ENCODE measurements at regions of chr12 and their contacts with region 1.

Region 1: GRCh38 chr12:104478396-104479122 is 21.8 kb downstream of the CHST11 start:
- DNase-seq: peak; percentile 43
- ATAC-seq: peak; percentile 78
- H3K4me3 Mint-ChIP-seq: peak overlapping the region; percentile 94
- H3K27ac Mint-ChIP-seq: peak overlapping the region; percentile 96
- H3K4me1 Mint-ChIP-seq: peaks cover 73% of the 10 kb centered on the region
- H3K27me3 Mint-ChIP-seq: no peaks in the 10 kb centered on the region

Region 2: GRCh38 chr12:104411826-104412641 is 66.5 kb before region 1 on chr12:
- POLR2A ChIA-PET with region 1: no interaction called
- DNase-seq: no peak
- ATAC-seq: no peak
- H3K4me3 Mint-ChIP-seq: no peak overlapping the region
- H3K27ac Mint-ChIP-seq: no peak overlapping the region
- H3K4me1 Mint-ChIP-seq: no peaks in the 10 kb centered on the region
- H3K27me3 Mint-ChIP-seq: peaks cover 4% of the 10 kb centered on the region

Region 3: GRCh38 chr12:104467346-104467837 is 11.2 kb before region 1 on chr12:
- POLR2A ChIA-PET with region 1: interaction called, 23 read pairs
- DNase-seq: no peak
- ATAC-seq: peak; percentile 48
- H3K4me3 Mint-ChIP-seq: peak overlapping the region; percentile 71
- H3K27ac Mint-ChIP-seq: peak overlapping the region; percentile 78
- H3K4me1 Mint-ChIP-seq: peaks cover 81% of the 10 kb centered on the region
- H3K27me3 Mint-ChIP-seq: no peaks in the 10 kb centered on the region

Region 4: DNA sequence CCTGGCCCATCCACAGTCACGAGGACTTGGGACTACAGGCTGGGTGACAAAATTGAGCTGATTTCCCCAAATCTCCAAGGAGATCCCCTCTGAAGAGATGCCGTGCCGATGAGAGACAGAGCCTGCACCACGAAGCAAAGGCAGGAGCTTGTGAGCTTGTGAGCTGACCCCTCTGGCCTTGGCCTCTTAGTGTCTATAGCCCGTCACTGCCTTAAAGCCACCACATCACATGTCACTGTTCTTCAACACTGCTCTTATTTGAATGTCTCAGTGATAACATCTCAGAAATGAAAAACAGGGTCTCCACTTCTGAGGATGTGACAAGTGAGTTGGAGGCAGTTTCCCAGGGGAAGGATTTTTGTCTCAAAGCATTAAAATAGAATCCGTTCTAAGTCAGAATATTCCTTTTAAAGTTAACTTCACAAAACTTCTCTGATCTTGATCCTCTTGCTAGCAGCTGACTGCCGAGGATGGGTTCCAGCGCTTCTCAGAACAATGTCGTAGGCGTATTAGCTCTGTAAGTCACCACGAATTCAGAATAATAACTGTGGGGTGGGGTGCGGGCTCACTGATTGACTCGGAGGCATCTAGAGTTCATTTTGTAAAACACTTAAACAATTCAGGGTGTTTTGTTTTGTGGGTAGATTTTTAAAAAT is 15.7 kb after region 1 on chr12:
- POLR2A ChIA-PET with region 1: interaction called, 12 read pairs
- DNase-seq: no peak
- ATAC-seq: peak; percentile 65
- H3K4me3 Mint-ChIP-seq: peak overlapping the region; percentile 77
- H3K27ac Mint-ChIP-seq: peak overlapping the region; percentile 90
- H3K4me1 Mint-ChIP-seq: peaks cover 73% of the 10 kb centered on the region
- H3K27me3 Mint-ChIP-seq: no peaks in the 10 kb centered on the region